Activated naive CD8-positive, alpha-beta T cell treated with anti-CD3 and anti-CD28 coated beads, Interleukin-2, amount 10 ng/mL, durations not matched to agents 7 days and 5 days (primary cell): ENCODE measurements at regions of chr7 and their contacts with region 1.

Region 1: DNA sequence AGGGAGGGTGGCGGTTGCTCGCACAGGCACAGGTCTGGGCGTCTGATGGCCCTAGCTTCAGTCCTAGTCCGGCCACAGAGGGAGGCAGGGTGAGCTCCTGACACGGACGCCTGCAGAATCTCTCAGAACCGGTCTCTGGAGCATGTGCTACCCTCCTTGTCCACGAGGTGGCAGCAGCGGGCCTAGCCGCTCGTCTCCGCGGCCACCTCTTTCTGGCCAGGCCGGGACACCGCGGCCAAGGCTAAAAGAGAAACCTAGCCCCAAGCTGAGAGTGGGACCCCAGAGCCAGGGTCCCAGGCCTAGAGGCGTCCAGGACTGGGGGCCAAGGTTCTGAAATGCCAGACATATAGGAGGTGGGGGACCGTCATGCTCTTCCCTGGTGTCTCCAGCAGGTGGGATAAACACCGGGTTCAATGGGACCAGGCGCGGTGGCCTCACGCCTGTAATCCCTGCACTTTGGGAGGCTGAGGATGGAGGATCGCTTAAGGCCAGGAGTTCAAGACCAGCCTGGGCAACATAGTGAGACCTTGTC is 3.2 kb upstream of the LAT2 start:
- DNase-seq: peak; percentile 91
- ATAC-seq: peak; percentile 49
- H3K4me3 Mint-ChIP-seq: peak overlapping the region; percentile 16
- H3K27ac Mint-ChIP-seq: peak overlapping the region; percentile 21
- H3K4me1 Mint-ChIP-seq: peaks cover 26% of the 10 kb centered on the region
- H3K27me3 Mint-ChIP-seq: peaks cover 3% of the 10 kb centered on the region

Region 2: GRCh38 chr7:74222851-74223710 is 16.4 kb after region 1 on chr7:
- POLR2A ChIA-PET with region 1: no interaction called
- DNase-seq: no peak
- ATAC-seq: no peak
- H3K4me3 Mint-ChIP-seq: no peak overlapping the region
- H3K27ac Mint-ChIP-seq: peak overlapping the region; percentile 37
- H3K4me1 Mint-ChIP-seq: peaks cover 15% of the 10 kb centered on the region
- H3K27me3 Mint-ChIP-seq: no peaks in the 10 kb centered on the region

Region 3: DNA sequence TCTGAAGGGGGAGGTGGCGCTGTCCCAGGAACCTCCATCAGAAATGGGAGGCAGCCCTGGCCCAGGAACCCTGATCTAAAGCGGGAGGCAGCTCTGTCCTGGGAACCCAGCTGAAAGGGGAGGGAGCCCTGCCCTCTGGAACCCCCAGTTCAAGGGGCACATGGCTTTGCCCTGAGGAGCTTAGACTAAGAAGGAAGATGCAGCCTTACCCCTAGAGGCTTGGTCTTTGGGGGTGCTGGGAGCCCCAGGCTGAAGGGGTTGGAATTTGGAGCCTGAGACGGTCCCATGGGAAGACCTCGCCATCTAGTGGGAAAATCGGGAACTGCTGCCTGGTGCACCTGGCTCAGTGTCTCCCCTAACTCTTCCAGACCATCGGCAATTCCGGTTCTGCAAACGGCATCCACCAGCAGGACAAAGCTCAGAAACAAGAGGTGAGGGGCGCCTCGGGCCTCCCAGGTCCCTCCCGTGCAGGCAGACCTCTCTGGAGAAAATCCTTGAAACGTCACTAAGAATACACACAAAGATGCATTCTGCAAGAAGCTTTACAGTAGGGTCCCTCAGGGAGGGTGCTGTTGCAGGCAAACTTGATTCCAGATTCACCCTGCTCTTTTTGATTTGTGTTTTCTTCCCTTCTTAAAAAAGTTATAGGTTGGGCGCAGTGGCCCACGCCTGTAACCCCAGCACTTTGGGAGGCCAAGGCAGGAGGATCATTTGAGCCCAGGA is 194.6 kb after region 1 on chr7:
- POLR2A ChIA-PET with region 1: interaction called, 17 read pairs
- DNase-seq: peak; percentile 76
- ATAC-seq: peak; percentile 53
- H3K4me3 Mint-ChIP-seq: no peak overlapping the region
- H3K27ac Mint-ChIP-seq: no peak overlapping the region
- H3K4me1 Mint-ChIP-seq: peaks cover 2% of the 10 kb centered on the region
- H3K27me3 Mint-ChIP-seq: no peaks in the 10 kb centered on the region